PC-3 (cell line): ENCODE measurements at regions of chr7 and their contacts with region 1.

Region 1: GRCh38 chr7:19958309-19958896 is 185.0 kb upstream of the TMEM196 start:
- DNase-seq: peak; percentile 98
- ATAC-seq: peak; percentile 92
- H3K4me3 ChIP-seq: no peak overlapping the region
- H3K27ac ChIP-seq: peak overlapping the region; percentile 99
- H3K4me1 ChIP-seq: peaks cover 19% of the 10 kb centered on the region
- H3K27me3 ChIP-seq: no peaks in the 10 kb centered on the region
- CTCF ChIP-seq: no peak

Region 2: DNA sequence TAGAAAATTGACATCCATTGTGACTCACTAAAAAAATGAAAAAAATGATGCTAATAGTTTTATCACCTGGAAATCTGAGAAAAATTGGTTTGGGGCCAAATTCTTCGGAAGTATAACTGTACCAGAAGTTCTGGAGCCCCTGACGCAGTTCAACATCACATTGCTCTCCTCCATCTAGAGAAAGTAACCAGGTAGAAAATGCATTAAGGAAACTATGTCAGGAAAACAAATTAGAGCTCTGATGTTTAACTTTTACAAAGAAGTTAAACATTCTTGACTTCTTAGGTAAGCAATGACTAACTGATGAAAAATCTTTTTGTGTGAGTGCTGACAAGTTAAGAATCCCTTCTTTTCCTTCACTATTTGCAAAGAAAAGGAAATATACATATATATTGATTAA is 123.8 kb before region 1 on chr7:
- CTCF ChIA-PET with region 1: no interaction called
- POLR2A ChIA-PET with region 1: no interaction called
- intact Hi-C with region 1: loop called (anchors 2 kb)
- DNase-seq: peak; percentile 86
- ATAC-seq: peak; percentile 77
- H3K4me3 ChIP-seq: no peak overlapping the region
- H3K27ac ChIP-seq: peak overlapping the region; percentile 23
- H3K4me1 ChIP-seq: peaks cover 24% of the 10 kb centered on the region
- H3K27me3 ChIP-seq: no peaks in the 10 kb centered on the region
- CTCF ChIP-seq: no peak

Region 3: DNA sequence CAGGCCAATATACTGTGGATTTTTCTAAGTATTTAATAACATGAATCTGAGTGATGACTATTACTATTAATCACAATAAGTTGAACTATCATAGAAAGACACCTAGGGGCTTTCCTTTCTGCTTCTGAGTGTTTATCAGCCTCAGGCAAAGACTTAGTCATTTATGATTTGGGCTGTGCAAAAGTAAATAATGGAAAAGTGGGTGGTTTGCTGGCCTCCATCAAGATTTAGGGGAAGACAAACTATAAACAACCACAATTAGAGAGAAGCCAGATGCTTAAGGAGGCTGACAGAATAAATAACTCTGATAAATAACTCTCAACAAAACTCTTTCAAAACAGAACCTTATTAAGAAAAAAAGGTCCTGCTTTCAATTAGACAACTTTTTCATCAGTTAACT is 194.1 kb after region 1 on chr7:
- CTCF ChIA-PET with region 1: no interaction called
- POLR2A ChIA-PET with region 1: interaction called, 4 read pairs
- intact Hi-C with region 1: loop called (anchors 1 kb)
- DNase-seq: peak; percentile 88
- ATAC-seq: peak; percentile 89
- H3K4me3 ChIP-seq: no peak overlapping the region
- H3K27ac ChIP-seq: peak overlapping the region; percentile 78
- H3K4me1 ChIP-seq: peaks cover 32% of the 10 kb centered on the region
- H3K27me3 ChIP-seq: no peaks in the 10 kb centered on the region
- CTCF ChIP-seq: no peak

Region 4: GRCh38 chr7:20241194-20241910 is 282.9 kb after region 1 on chr7:
- CTCF ChIA-PET with region 1: no interaction called
- POLR2A ChIA-PET with region 1: no interaction called
- intact Hi-C with region 1: loop called (anchors 5 kb)
- DNase-seq: peak; percentile 83
- ATAC-seq: peak; percentile 64
- H3K4me3 ChIP-seq: no peak overlapping the region
- H3K27ac ChIP-seq: peak overlapping the region; percentile 76
- H3K4me1 ChIP-seq: peaks cover 37% of the 10 kb centered on the region
- H3K27me3 ChIP-seq: no peaks in the 10 kb centered on the region
- CTCF ChIP-seq: no peak

Region 5: DNA sequence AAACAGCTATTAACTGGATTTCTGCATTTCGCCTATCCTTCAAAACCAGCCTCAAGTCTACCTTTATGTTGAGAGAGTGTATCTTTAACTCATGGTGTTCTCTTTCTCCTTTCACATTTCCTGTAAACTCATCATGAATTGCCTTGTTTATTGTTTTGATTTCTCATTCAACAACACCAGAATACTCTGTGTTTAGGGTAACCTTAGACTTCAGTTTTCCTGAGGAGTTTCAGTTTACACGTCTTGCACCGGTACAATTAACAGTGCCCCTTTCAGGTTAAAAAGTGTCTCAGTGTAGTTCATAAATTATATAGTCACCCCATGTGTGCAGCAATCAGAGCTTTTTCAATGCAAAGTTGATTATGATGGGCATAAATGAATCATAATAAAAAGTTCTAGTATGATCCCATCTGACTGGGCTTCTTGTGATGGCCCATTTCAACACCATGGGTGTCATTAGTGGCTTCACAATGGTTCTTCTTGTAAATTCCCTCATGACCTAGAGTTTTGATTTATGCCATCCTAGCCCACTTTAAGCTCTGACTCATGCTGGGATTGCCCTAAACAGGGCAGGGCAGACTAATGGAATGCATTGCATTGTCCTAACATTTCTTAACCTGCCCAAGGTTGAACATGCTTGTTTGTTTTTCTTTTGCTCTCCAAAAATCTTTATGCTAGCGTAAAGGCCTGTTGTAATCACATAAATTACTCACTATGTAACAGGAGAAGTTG is 394.3 kb after region 1 on chr7:
- CTCF ChIA-PET with region 1: no interaction called
- POLR2A ChIA-PET with region 1: interaction called, 7 read pairs
- intact Hi-C with region 1: loop called (anchors 2 kb)
- DNase-seq: peak; percentile 97
- ATAC-seq: peak; percentile 94
- H3K4me3 ChIP-seq: peak overlapping the region; percentile 45
- H3K27ac ChIP-seq: peak overlapping the region; percentile 95
- H3K4me1 ChIP-seq: peaks cover 46% of the 10 kb centered on the region
- H3K27me3 ChIP-seq: no peaks in the 10 kb centered on the region
- CTCF ChIP-seq: no peak